Naive thymus-derived CD4-positive, alpha-beta T cell (primary cell): ENCODE measurements at regions of chr2 and their contacts with region 1.

Region 1: DNA sequence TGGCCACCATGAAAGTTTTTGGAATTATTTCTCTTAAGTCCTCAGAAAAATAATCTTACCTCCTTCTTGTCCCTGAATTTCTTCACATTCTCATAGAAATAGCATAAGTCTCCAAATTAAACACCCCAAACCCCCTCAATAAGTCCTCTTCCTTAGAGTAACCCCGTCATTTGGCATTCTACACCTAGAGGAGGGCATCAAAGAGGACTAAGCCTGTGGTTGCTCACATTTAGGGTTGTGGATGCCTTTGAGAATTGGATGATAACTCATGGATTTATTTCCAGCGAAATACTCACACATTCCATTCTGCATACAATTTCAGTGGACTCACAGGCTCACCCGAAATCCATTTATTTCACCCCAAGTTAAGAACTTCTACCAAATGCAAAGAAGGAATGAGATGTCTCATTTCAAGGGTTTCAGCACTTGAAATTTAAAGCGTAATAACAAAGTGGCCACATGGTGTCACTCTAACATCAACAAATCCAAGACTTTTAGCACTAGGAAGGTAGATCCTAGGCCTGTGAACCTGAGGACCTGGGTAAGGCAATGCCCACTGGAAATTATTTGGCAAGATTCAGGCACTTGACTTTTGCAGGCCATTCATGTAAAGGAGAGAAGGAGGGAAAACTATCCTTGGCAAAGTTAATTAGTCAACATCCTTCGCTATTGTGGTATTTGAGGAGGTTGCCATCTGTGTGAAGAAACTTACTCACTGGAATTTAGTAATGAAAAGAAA is 24.6 kb downstream of the DYTN start:
- DNase-seq: peak in 7 of 9 donors; percentile 11 to 56 (median 41)
- ATAC-seq: peak; percentile 75
- H3K4me3 ChIP-seq: no peak overlapping the region
- H3K4me3 Mint-ChIP-seq: no peak overlapping the region
- H3K27ac ChIP-seq: no peak overlapping the region
- H3K27ac Mint-ChIP-seq: no peak overlapping the region
- H3K4me1 ChIP-seq: no peaks in the 10 kb centered on the region
- H3K4me1 Mint-ChIP-seq: peaks cover 0 to 4% (median 0%) of the 10 kb centered on the region in 7 donors
- H3K27me3 ChIP-seq: no peaks in the 10 kb centered on the region
- H3K27me3 Mint-ChIP-seq: peaks cover 0 to 7% (median 0%) of the 10 kb centered on the region in 5 donors

Region 2: GRCh38 chr2:206783718-206784117 is 90.2 kb after region 1 on chr2:
- CTCF ChIA-PET with region 1: interaction called, 5 read pairs
- POLR2A ChIA-PET with region 1: no interaction called
- intact Hi-C with region 1: loop called (anchors 1 kb)
- DNase-seq: no peak
- ATAC-seq: peak; percentile 36
- H3K4me3 ChIP-seq: no peak overlapping the region
- H3K4me3 Mint-ChIP-seq: no peak overlapping the region
- H3K27ac ChIP-seq: no peak overlapping the region
- H3K27ac Mint-ChIP-seq: peak overlapping the region in 2 of 9 donors; percentile 22 to 58
- H3K4me1 ChIP-seq: no peaks in the 10 kb centered on the region
- H3K4me1 Mint-ChIP-seq: peaks cover 3 to 30% (median 19%) of the 10 kb centered on the region in 7 donors
- H3K27me3 ChIP-seq: no peaks in the 10 kb centered on the region
- H3K27me3 Mint-ChIP-seq: no peaks in the 10 kb centered on the region

Region 3: DNA sequence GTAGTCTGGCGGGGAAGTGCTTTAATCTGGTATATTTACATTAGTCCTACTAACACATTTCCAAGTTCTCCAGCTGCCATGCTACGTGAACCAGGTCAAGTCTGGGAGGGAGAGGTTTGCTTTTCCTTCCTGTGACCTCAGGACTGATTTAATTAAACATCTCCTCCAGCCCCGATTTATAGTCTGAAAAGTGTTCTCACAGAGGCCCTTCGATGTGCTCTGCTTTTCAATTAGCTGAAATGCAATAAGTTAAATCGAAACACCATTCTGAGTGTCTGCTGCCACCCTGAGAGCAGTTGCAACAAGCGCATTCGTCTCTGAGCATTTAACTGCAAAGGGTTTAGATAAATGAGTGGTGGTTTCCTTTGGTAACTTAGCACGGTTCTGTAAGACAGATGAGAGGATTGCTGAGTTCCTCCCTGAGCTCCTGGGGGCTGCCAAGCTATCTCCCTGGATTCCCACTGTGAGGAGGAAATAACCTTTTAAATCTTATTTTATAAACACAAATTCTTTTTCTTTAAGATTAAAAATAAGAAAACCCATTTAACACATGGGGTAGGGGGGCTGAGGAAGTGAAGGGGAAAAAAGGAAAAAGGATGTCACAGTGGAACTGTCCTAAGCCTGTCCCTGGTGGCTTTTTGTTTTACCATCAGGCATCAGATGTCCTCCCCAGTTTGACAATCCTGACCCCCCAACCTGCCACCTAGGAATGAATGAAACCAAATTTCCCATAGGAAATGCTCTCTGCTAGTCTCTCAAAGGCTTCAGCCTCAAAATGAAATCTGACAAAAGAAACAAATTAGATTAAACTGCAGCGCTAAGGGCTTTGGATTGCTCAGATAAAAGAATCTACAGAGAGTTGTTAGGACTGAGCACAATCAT is 779.7 kb after region 1 on chr2:
- CTCF ChIA-PET with region 1: interaction called, 4 read pairs
- POLR2A ChIA-PET with region 1: no interaction called
- intact Hi-C with region 1: loop called (anchors 1 kb)
- DNase-seq: peak in 8 of 9 donors; percentile 25 to 68 (median 52)
- ATAC-seq: peak; percentile 76
- H3K4me3 ChIP-seq: no peak overlapping the region
- H3K4me3 Mint-ChIP-seq: peak overlapping the region in 4 of 10 donors; percentile 20 to 52 (median 42)
- H3K27ac ChIP-seq: no peak overlapping the region
- H3K27ac Mint-ChIP-seq: peak overlapping the region in 7 of 9 donors; percentile 14 to 71 (median 48)
- H3K4me1 ChIP-seq: no peaks in the 10 kb centered on the region
- H3K4me1 Mint-ChIP-seq: peaks cover 6 to 23% (median 18%) of the 10 kb centered on the region in 7 donors
- H3K27me3 ChIP-seq: no peaks in the 10 kb centered on the region
- H3K27me3 Mint-ChIP-seq: peaks cover 0 to 4% (median 0%) of the 10 kb centered on the region in 5 donors

Region 4: DNA sequence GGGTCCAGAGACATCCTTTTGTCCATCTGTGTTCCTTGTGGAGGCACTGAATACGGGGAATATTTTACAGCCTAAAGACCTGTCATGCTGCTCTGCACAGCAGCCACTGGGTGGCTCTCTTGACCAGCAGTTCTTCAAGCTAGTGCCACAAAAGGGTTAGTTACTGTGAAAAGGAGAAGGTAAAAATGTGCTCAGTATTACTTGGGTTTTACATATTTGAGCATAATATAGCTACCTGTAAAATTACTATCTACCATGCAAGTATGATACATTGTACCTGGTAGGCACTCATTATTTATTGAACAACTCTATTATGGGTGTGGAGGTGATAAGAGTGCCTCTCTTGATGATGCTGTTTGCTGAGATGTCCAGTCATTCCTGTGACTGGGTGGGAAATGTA is 1052.6 kb after region 1 on chr2:
- CTCF ChIA-PET with region 1: no interaction called
- POLR2A ChIA-PET with region 1: no interaction called
- intact Hi-C with region 1: loop called in 1 of 2 experiments (anchors 10 kb)
- DNase-seq: peak in 7 of 9 donors; percentile 17 to 50 (median 34)
- ATAC-seq: peak; percentile 85
- H3K4me3 ChIP-seq: no peak overlapping the region
- H3K4me3 Mint-ChIP-seq: no peak overlapping the region
- H3K27ac ChIP-seq: no peak overlapping the region
- H3K27ac Mint-ChIP-seq: peak overlapping the region in 1 of 9 donors; percentile 20
- H3K4me1 ChIP-seq: no peaks in the 10 kb centered on the region
- H3K4me1 Mint-ChIP-seq: no peaks in the 10 kb centered on the region
- H3K27me3 ChIP-seq: no peaks in the 10 kb centered on the region
- H3K27me3 Mint-ChIP-seq: no peaks in the 10 kb centered on the region

Region 5: GRCh38 chr2:208040199-208041171 is 1346.9 kb after region 1 on chr2:
- CTCF ChIA-PET with region 1: no interaction called
- POLR2A ChIA-PET with region 1: no interaction called
- intact Hi-C with region 1: loop called in 1 of 2 experiments (anchors 1 kb)
- DNase-seq: peak; percentile 21 to 67 (median 54)
- ATAC-seq: peak; percentile 77
- H3K4me3 ChIP-seq: no peak overlapping the region
- H3K4me3 Mint-ChIP-seq: no peak overlapping the region
- H3K27ac ChIP-seq: no peak overlapping the region
- H3K27ac Mint-ChIP-seq: peak overlapping the region in 1 of 9 donors; percentile 25
- H3K4me1 ChIP-seq: no peaks in the 10 kb centered on the region
- H3K4me1 Mint-ChIP-seq: no peaks in the 10 kb centered on the region
- H3K27me3 ChIP-seq: no peaks in the 10 kb centered on the region
- H3K27me3 Mint-ChIP-seq: peaks cover 0 to 10% (median 5%) of the 10 kb centered on the region in 5 donors

Region 6: DNA sequence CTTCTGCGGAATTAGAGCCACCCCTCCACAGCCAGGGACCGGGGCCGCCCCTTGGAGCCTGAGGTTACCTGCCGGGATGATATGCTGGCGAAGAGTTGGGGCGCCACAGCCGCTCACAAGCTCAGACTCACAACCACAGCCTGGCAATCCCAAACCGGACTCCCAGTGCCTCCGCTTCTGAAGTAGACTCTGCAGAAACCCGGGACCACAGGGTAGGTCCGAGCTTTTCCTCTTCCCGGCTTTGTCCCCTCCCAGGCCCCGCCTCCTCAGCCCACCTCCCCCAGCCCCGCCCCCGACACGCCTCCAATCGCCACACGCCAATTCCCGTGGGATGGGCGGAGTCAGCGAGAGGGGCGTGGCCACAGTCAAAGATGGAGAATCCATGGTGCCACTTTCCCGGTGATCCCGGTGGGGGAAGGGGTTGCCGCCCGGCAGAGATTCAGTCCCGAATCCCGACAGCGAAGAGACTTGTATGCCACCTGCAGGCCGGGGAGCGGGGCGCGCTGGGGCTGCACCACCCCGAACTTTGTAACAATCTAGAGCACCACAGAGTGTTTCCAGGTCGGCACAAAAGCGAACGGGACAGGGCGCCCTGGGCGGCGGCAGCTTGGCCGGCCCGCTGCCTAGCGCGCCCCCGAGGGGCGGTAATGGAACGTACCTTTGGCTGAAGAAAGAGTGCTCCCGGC is 1561.4 kb after region 1 on chr2 and contains the start of gene IDH1:
- CTCF ChIA-PET with region 1: no interaction called
- POLR2A ChIA-PET with region 1: no interaction called
- intact Hi-C with region 1: loop called in 1 of 2 experiments (anchors 5 kb)
- DNase-seq: peak; percentile 79 to 97 (median 88)
- ATAC-seq: peak; percentile 95
- H3K4me3 ChIP-seq: peak within 1 kb of the TSS; percentile 70
- H3K4me3 Mint-ChIP-seq: peak within 1 kb of the TSS; percentile 93 to 100 (median 97)
- H3K27ac ChIP-seq: peak within 1 kb of the TSS; percentile 62
- H3K27ac Mint-ChIP-seq: peak within 1 kb of the TSS; percentile 47 to 91 (median 79)
- H3K4me1 ChIP-seq: peaks cover 0 to 9% of the 10 kb centered on the region in 2 donors
- H3K4me1 Mint-ChIP-seq: peaks cover 8 to 28% (median 23%) of the 10 kb centered on the region in 7 donors
- H3K27me3 ChIP-seq: no peaks in the 10 kb centered on the region
- H3K27me3 Mint-ChIP-seq: peaks cover 0 to 3% (median 0%) of the 10 kb centered on the region in 5 donors
- total RNA-seq, gene IDH1: 5.0 to 26.4 (median 20.4) TPM